ENCODE measurements at regions of chr3 and their contacts with region 1.

Region 1: DNA sequence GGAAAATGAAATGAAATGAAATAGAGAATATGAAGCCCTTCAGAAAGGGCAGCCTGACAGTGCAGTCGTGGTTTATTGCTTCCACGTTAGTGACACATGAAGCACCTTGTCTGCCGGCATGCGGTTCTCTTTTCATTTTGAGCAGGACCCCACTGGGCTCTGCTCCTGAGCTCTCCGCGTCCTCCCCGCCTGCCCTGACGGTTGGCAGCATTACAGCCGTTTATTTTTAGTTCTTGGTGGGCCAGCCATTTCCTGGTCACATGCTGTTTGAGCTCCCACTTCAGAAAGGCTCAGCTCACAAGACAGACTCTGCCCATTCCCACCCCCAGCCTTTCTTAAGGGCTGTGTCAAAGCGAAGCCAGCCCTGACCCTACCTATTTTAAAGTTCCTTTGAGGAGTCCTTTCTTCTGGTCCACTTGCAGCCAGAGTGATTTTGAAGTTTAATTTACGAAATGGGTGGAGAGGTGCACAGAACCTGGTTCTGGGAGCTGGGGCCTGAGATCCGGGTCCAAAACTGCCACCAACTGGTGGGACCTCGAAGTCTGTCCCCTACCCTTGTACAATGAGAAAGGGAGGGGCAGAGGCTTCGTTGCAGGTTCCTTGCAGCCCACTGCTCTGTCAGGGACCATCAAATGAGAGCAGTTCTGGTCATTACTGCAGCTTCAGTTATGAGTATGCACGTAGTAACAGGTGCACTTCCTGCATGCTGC is 60.1 kb downstream of the MGLL start:
- DNase-seq: peak in 1 of 2 donors; percentile 67
- ATAC-seq: peak; percentile 53 to 78 (median 68)
- H3K4me3 ChIP-seq: peak overlapping the region; percentile 39
- H3K27ac ChIP-seq: peak overlapping the region; percentile 83
- H3K4me1 ChIP-seq: peaks cover 45% of the 10 kb centered on the region
- H3K27me3 ChIP-seq: no peaks in the 10 kb centered on the region
- CTCF ChIP-seq: no peak

Region 2: GRCh38 chr3:127817396-127817841 is 55.2 kb after region 1 on chr3:
- intact Hi-C with region 1: loop called in 1 of 2 experiments (anchors 5 kb)
- DNase-seq: peak; percentile 28 to 61
- ATAC-seq: peak; percentile 88 to 95 (median 92)
- H3K4me3 ChIP-seq: peak overlapping the region; percentile 22
- H3K27ac ChIP-seq: peak overlapping the region; percentile 93
- H3K4me1 ChIP-seq: peaks cover 70% of the 10 kb centered on the region
- H3K27me3 ChIP-seq: no peaks in the 10 kb centered on the region
- CTCF ChIP-seq: no peak